ENCODE measurements at regions of chr12 and their contacts with region 1.

Region 1: DNA sequence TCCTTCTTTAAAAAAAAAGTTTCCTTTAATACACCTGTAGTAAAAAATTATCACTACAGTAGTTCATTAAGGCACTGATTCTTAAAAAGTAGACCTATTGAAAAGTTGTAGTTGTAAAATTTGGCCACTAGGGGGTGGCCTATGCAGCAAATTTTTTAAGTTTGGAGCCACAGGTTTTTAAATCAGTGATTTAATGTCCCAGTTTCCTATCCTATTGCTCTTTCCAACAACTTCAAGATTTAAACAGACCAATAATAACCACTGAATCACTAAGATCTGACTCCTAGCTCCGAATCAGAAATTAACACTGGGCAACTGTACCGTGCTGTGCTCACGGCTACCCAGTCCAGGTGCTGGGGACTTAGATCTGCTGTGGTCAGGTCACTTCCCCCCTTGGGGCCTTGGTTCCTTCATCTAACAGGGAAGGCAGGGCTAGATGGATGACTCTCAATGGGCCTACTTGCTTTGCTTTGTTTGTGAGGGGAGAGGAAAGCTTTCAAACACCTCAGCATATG is 279.3 kb downstream of the MED13L start:
- DNase-seq: no peak
- ATAC-seq: peak; percentile 30 to 39

Region 2: GRCh38 chr12:116236148-116236731 is 238.1 kb after region 1 on chr12:
- intact Hi-C with region 1: loop called in 1 of 2 experiments (anchors 5 kb)
- DNase-seq: no peak
- ATAC-seq: peak; percentile 70 to 72

Region 3: DNA sequence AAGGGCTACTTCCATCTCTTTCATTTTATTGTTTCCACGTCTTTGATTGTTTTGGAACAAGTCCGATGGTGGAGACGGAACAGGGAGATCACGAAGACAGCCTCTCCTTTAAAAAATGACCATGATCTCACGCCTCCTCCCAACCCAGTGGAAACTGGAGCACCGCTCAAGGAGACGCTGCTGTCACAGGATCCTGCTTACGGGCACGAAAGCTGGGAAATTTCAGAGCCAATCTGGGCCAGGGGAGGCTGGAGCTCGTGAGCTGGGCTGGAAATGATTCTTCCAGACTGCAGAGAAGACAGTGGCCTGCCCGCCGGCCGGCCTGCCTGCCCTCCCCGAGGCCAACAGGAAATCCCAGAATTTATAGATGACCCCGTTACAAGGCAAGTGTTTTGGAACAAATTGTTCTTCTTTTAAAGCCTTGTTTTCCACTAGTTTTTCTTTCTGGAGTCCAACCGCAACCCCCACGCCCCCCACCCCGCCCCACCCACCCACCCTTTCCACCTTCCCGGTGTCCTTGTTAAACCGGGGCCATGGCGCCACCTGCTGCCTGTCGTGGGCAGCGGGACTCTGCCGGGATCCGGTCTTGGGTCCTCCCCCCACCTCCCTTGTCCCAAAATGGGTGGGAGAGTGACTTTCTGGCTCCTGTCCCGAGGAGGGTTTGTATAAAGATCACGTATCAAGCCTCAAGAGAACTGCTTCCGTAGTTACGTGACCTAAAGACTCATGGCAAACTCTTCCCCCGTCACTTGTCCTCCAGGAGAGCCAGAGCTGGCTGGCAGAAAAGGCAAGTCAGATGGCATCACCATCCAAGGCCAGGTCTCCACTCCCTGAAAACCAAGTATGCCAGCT is 601.3 kb after region 1 on chr12:
- intact Hi-C with region 1: loop called in 1 of 2 experiments (anchors 5 kb)
- DNase-seq: peak; percentile 88
- ATAC-seq: peak; percentile 87 to 88

Region 4: GRCh38 chr12:116708826-116709756 is 710.9 kb after region 1 on chr12:
- intact Hi-C with region 1: loop called (anchors 5 to 10 kb)
- DNase-seq: peak; percentile 44
- ATAC-seq: peak; percentile 79

Region 5: GRCh38 chr12:116717466-116718437 is 719.6 kb after region 1 on chr12:
- intact Hi-C with region 1: loop called in 1 of 2 experiments (anchors 10 kb)
- DNase-seq: peak; percentile 75
- ATAC-seq: peak; percentile 74 to 85